Right ventricle myocardium inferior (tissue), 1 donor: ENCODE measurements at regions of chr4 and their contacts with region 1.

Region 1: GRCh38 chr4:146283758-146284651 is 69.7 kb downstream of the REELD1 start:
- DNase-seq: no peak
- ATAC-seq: no peak

Region 2: DNA sequence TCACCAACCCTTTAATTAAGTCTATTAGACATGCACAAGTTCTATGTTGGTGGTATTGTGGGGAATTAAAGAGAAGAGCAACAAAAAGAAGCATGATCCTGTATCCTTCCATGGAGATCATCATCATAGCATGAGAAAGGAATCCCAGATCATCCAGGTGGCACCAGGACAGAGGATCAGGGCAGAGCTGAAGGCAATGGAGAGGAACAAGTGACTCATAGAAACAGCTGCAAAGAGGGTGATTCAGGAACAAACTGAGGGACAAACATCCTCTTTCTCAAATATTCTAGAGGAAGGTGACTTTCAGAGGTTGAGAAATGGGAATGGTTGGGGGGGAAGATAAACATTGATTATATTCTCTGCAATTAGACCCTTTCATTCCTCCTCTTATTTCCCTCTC is 998.1 kb before region 1 on chr4:
- intact Hi-C with region 1: no loop called
- DNase-seq: no peak
- ATAC-seq: no peak

Region 3: GRCh38 chr4:145936142-145936996 is 347.6 kb before region 1 on chr4:
- intact Hi-C with region 1: no loop called
- DNase-seq: peak; percentile 76
- ATAC-seq: peak; percentile 63

Region 4: GRCh38 chr4:146243141-146243882 is 40.7 kb before region 1 on chr4:
- intact Hi-C with region 1: loop called (anchors 2 kb)
- DNase-seq: no peak
- ATAC-seq: no peak